CD8-positive, alpha-beta T cell (primary cell): ENCODE measurements at regions of chr2 and their contacts with region 1.

Region 1: GRCh38 chr2:42196403-42197267 is 27.5 kb downstream of the EML4 start:
- DNase-seq: peak in 8 of 9 experiments; percentile 15 to 78 (median 47)
- ATAC-seq: peak; percentile 80
- H3K4me3 ChIP-seq: no peak overlapping the region
- H3K4me3 Mint-ChIP-seq: no peak overlapping the region
- H3K27ac ChIP-seq: no peak overlapping the region
- H3K27ac Mint-ChIP-seq: peak overlapping the region; percentile 52
- H3K4me1 ChIP-seq: peaks cover 51% of the 10 kb centered on the region
- H3K4me1 Mint-ChIP-seq: peaks cover 79% of the 10 kb centered on the region
- H3K27me3 ChIP-seq: no peaks in the 10 kb centered on the region
- H3K27me3 Mint-ChIP-seq: no peaks in the 10 kb centered on the region
- CTCF ChIP-seq: peak; percentile 74

Region 2: DNA sequence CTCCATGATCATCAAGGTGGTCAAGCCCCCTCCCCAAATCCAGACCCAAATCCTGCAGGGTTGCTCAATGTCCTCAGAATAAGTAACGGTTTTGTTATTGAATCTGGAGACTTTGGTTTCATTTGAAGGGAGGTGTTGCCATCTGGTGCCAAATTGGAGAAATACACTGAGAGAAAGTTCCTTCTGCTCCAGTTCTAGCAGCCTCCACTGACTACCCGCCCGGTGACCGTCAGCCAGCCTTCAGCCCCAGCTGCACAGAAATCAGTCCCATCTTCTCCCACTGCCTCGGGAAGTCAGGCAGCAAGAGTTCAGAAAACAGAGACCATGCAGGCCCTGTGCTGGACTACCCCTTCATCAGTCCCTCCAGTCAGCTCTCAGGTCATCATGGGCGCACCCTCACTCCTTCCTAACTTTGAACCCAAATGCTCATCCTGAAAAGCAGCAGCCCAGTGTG is 110.1 kb before region 1 on chr2:
- CTCF ChIA-PET with region 1: interaction called, 119 read pairs
- POLR2A ChIA-PET with region 1: no interaction called
- intact Hi-C with region 1: no loop called
- DNase-seq: peak in 4 of 9 experiments; percentile 27 to 74 (median 48)
- ATAC-seq: peak; percentile 78
- H3K4me3 ChIP-seq: no peak overlapping the region
- H3K4me3 Mint-ChIP-seq: no peak overlapping the region
- H3K27ac ChIP-seq: no peak overlapping the region
- H3K27ac Mint-ChIP-seq: no peak overlapping the region
- H3K4me1 ChIP-seq: no peaks in the 10 kb centered on the region
- H3K4me1 Mint-ChIP-seq: peaks cover 8% of the 10 kb centered on the region
- H3K27me3 ChIP-seq: no peaks in the 10 kb centered on the region
- H3K27me3 Mint-ChIP-seq: peaks cover 3% of the 10 kb centered on the region
- CTCF ChIP-seq: peak; percentile 62

Region 3: GRCh38 chr2:42102024-42102590 is 94.5 kb before region 1 on chr2:
- CTCF ChIA-PET with region 1: interaction called, 23 read pairs
- POLR2A ChIA-PET with region 1: interaction called, 8 read pairs
- intact Hi-C with region 1: no loop called
- DNase-seq: peak; percentile 84 to 98 (median 92)
- ATAC-seq: peak; percentile 74
- H3K4me3 ChIP-seq: peak overlapping the region; percentile 49 to 53
- H3K4me3 Mint-ChIP-seq: peak overlapping the region; percentile 85
- H3K27ac ChIP-seq: peak overlapping the region; percentile 88 to 97
- H3K27ac Mint-ChIP-seq: no peak overlapping the region
- H3K4me1 ChIP-seq: peaks cover 90% of the 10 kb centered on the region
- H3K4me1 Mint-ChIP-seq: peaks cover 46% of the 10 kb centered on the region
- H3K27me3 ChIP-seq: no peaks in the 10 kb centered on the region
- H3K27me3 Mint-ChIP-seq: no peaks in the 10 kb centered on the region
- CTCF ChIP-seq: no peak

Region 4: GRCh38 chr2:42132966-42133641 is 63.5 kb before region 1 on chr2:
- CTCF ChIA-PET with region 1: interaction called, 10 read pairs
- POLR2A ChIA-PET with region 1: interaction called, 3 read pairs
- intact Hi-C with region 1: loop called in 1 of 2 experiments (anchors 2 kb)
- DNase-seq: peak; percentile 83 to 97 (median 90)
- ATAC-seq: peak; percentile 88
- H3K4me3 ChIP-seq: peak overlapping the region; percentile 6 to 22
- H3K4me3 Mint-ChIP-seq: peak overlapping the region; percentile 76
- H3K27ac ChIP-seq: peak overlapping the region; percentile 61 to 90
- H3K27ac Mint-ChIP-seq: peak overlapping the region; percentile 98
- H3K4me1 ChIP-seq: peaks cover 80% of the 10 kb centered on the region
- H3K4me1 Mint-ChIP-seq: peaks cover 85% of the 10 kb centered on the region
- H3K27me3 ChIP-seq: no peaks in the 10 kb centered on the region
- H3K27me3 Mint-ChIP-seq: no peaks in the 10 kb centered on the region
- CTCF ChIP-seq: no peak

Region 5: GRCh38 chr2:42169100-42169873 is 27.3 kb before region 1 on chr2 and contains the start of gene EML4:
- CTCF ChIA-PET with region 1: interaction called, 14 read pairs
- POLR2A ChIA-PET with region 1: no interaction called
- intact Hi-C with region 1: loop called in 1 of 2 experiments (anchors 2 kb)
- DNase-seq: peak; percentile 81 to 97 (median 90)
- ATAC-seq: peak; percentile 88
- H3K4me3 ChIP-seq: peak within 1 kb of the TSS; percentile 72 to 86
- H3K4me3 Mint-ChIP-seq: no peak within 1 kb of the TSS
- H3K27ac ChIP-seq: peak within 1 kb of the TSS; percentile 77 to 92
- H3K27ac Mint-ChIP-seq: no peak within 1 kb of the TSS
- H3K4me1 ChIP-seq: peaks cover 45% of the 10 kb centered on the region
- H3K4me1 Mint-ChIP-seq: peaks cover 26% of the 10 kb centered on the region
- H3K27me3 ChIP-seq: no peaks in the 10 kb centered on the region
- H3K27me3 Mint-ChIP-seq: no peaks in the 10 kb centered on the region
- CTCF ChIP-seq: no peak
- total RNA-seq, gene EML4: 224 to 240 TPM

Region 6: GRCh38 chr2:42210203-42210602 is 13.6 kb after region 1 on chr2:
- CTCF ChIA-PET with region 1: interaction called, 5 read pairs
- POLR2A ChIA-PET with region 1: no interaction called
- intact Hi-C with region 1: loop called in 1 of 2 experiments (anchors 1 kb)
- DNase-seq: no peak
- ATAC-seq: no peak
- H3K4me3 ChIP-seq: no peak overlapping the region
- H3K4me3 Mint-ChIP-seq: no peak overlapping the region
- H3K27ac ChIP-seq: no peak overlapping the region
- H3K27ac Mint-ChIP-seq: no peak overlapping the region
- H3K4me1 ChIP-seq: peaks cover 33% of the 10 kb centered on the region
- H3K4me1 Mint-ChIP-seq: peaks cover 65% of the 10 kb centered on the region
- H3K27me3 ChIP-seq: no peaks in the 10 kb centered on the region
- H3K27me3 Mint-ChIP-seq: no peaks in the 10 kb centered on the region
- CTCF ChIP-seq: no peak

Region 7: DNA sequence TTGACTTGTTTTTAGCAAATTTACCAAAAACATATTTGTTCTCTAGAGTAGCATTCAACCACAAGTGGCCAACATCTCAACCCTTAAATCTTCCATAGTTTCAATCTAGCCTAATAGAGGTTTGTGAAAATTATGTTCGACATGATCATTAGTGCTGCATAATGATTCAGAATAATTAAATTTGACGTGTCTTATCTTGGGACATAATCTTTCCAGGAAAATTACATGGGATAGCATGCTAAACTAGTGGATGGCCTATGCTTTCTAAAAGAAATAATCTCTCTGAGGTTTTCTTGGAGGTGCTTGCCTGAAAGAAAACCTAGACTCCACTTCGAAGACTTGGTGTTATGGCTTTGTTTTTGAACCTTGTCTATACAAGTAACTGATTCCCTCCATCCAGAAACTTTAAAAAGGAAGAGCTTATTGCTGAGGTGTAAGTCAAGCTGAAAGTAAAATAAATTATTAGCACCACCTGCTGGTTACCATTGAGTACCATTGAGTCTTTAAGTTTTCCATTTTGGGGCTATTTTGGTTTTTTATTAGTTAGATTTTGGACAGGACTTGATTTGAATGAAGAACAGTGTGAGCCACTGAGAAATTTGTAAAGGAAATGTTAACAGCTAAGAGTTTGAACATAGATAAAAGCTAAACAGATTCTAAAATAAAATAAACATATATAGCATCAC is 131.7 kb after region 1 on chr2:
- CTCF ChIA-PET with region 1: interaction called, 7 read pairs
- POLR2A ChIA-PET with region 1: no interaction called
- intact Hi-C with region 1: loop called in 1 of 2 experiments (anchors 2 kb)
- DNase-seq: peak in 2 of 9 experiments; percentile 36 to 50
- ATAC-seq: peak; percentile 45
- H3K4me3 ChIP-seq: no peak overlapping the region
- H3K4me3 Mint-ChIP-seq: no peak overlapping the region
- H3K27ac ChIP-seq: no peak overlapping the region
- H3K27ac Mint-ChIP-seq: peak overlapping the region; percentile 43
- H3K4me1 ChIP-seq: no peaks in the 10 kb centered on the region
- H3K4me1 Mint-ChIP-seq: peaks cover 7% of the 10 kb centered on the region
- H3K27me3 ChIP-seq: no peaks in the 10 kb centered on the region
- H3K27me3 Mint-ChIP-seq: no peaks in the 10 kb centered on the region
- CTCF ChIP-seq: peak; percentile 55

Region 8: DNA sequence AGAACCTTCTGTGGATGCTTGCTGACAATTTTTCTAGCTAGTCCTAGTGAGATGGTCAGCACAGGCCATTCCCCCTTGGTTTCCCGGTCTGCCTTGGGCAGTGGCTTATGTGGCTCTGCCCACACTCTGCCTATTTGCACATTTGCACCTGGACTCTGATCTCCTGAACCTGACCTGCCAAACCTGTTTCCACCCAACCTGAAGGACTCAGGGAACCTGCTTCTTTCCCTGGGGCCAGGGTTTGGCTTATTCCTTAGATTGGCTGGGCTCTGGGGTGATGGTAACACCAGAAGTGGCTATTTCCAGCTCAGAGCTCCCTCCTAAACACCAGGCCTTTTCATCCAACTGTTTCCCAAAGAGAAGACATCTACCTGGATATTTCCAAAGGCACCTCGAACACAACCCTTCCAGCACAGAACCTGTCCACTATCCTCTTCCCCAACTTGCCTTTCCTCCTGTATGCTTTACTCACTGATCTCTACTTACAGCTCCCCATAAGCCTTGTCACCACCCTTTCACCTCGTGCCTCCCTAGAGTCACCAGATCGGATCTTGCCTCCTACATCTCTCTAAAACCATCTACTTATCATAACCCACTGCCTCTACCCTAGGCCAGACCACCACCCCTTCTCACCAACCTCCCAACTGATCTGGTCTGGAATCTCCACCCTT is 366.0 kb after region 1 on chr2:
- CTCF ChIA-PET with region 1: no interaction called
- POLR2A ChIA-PET with region 1: no interaction called
- intact Hi-C with region 1: no loop called
- DNase-seq: no peak
- ATAC-seq: no peak
- H3K4me3 ChIP-seq: no peak overlapping the region
- H3K4me3 Mint-ChIP-seq: no peak overlapping the region
- H3K27ac ChIP-seq: no peak overlapping the region
- H3K27ac Mint-ChIP-seq: no peak overlapping the region
- H3K4me1 ChIP-seq: peaks cover 21% of the 10 kb centered on the region
- H3K4me1 Mint-ChIP-seq: peaks cover 20% of the 10 kb centered on the region
- H3K27me3 ChIP-seq: no peaks in the 10 kb centered on the region
- H3K27me3 Mint-ChIP-seq: no peaks in the 10 kb centered on the region
- CTCF ChIP-seq: no peak